ENCODE measurements at regions of chr11 and their contacts with region 1.

Region 1: DNA sequence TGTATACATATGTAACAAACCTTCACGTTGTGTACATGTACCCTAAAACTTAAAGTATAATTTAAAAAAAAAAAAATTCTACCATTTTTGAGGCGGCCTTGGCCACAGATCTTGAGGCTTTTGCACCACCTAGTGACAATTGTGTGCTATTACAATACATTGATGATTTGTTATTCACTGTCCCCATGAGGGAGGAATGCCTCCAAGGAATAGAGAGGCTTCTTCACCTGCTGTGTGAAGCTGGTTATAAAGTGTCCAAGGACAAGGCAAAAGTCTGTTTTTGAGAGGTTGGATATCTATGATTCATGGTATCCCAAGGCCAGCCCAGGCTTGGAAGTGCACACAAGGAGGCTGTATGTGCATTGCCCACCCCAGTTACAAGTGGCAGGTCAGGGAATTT is 30.7 kb downstream of the SLC22A25 start:
- DNase-seq: peak in 4 of 14 experiments; percentile 3 to 49 (median 39)
- ATAC-seq: no peak
- H3K4me3 ChIP-seq: no peak overlapping the region
- H3K4me3 Mint-ChIP-seq: no peak overlapping the region
- H3K27ac ChIP-seq: no peak overlapping the region
- H3K27ac Mint-ChIP-seq: no peak overlapping the region
- H3K4me1 ChIP-seq: no peaks in the 10 kb centered on the region
- H3K4me1 Mint-ChIP-seq: no peaks in the 10 kb centered on the region
- H3K27me3 ChIP-seq: peaks cover 0 to 11% of the 10 kb centered on the region in 2 experiments
- H3K27me3 Mint-ChIP-seq: peaks cover 41% of the 10 kb centered on the region
- CTCF ChIP-seq: peak; percentile 59

Region 2: DNA sequence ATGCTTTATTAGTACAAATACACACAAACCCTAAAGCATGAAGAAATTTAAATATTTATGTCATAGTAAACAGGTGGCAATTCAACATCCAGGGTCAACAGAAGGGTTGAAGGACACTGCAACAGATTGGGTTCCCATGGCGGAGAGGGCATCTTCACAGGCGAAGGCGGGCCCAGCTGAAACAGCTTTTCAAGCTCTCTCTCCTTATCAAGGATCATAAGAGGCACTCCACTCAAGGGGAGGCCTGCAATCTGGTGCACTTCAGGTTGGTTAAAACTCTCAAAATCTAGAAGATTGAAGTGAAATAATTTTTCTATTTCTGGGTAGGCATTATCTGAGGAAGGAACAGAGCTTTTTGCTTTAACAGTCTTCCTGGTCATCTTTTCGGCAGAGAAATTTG is 180.3 kb before region 1 on chr11:
- CTCF ChIA-PET with region 1: no interaction called
- POLR2A ChIA-PET with region 1: no interaction called
- intact Hi-C with region 1: loop called (anchors 2 to 5 kb)
- DNase-seq: no peak
- ATAC-seq: no peak
- H3K4me3 ChIP-seq: no peak overlapping the region
- H3K4me3 Mint-ChIP-seq: no peak overlapping the region
- H3K27ac ChIP-seq: no peak overlapping the region
- H3K27ac Mint-ChIP-seq: no peak overlapping the region
- H3K4me1 ChIP-seq: peaks cover 2% of the 10 kb centered on the region
- H3K4me1 Mint-ChIP-seq: no peaks in the 10 kb centered on the region
- H3K27me3 ChIP-seq: peaks cover 0 to 5% of the 10 kb centered on the region in 2 experiments
- H3K27me3 Mint-ChIP-seq: peaks cover 48% of the 10 kb centered on the region
- CTCF ChIP-seq: no peak

Region 3: GRCh38 chr11:63042596-63042995 is 170.1 kb before region 1 on chr11:
- CTCF ChIA-PET with region 1: no interaction called
- POLR2A ChIA-PET with region 1: no interaction called
- intact Hi-C with region 1: loop called in 1 of 2 experiments (anchors 5 kb)
- DNase-seq: no peak
- ATAC-seq: no peak
- H3K4me3 ChIP-seq: no peak overlapping the region
- H3K4me3 Mint-ChIP-seq: no peak overlapping the region
- H3K27ac ChIP-seq: no peak overlapping the region
- H3K27ac Mint-ChIP-seq: no peak overlapping the region
- H3K4me1 ChIP-seq: no peaks in the 10 kb centered on the region
- H3K4me1 Mint-ChIP-seq: no peaks in the 10 kb centered on the region
- H3K27me3 ChIP-seq: peaks cover 4 to 7% of the 10 kb centered on the region in 2 experiments
- H3K27me3 Mint-ChIP-seq: peaks cover 52% of the 10 kb centered on the region
- CTCF ChIP-seq: no peak

Region 4: GRCh38 chr11:63099555-63099954 is 113.2 kb before region 1 on chr11:
- CTCF ChIA-PET with region 1: no interaction called
- POLR2A ChIA-PET with region 1: no interaction called
- intact Hi-C with region 1: no loop called
- DNase-seq: no peak
- ATAC-seq: no peak
- H3K4me3 ChIP-seq: no peak overlapping the region
- H3K4me3 Mint-ChIP-seq: no peak overlapping the region
- H3K27ac ChIP-seq: no peak overlapping the region
- H3K27ac Mint-ChIP-seq: no peak overlapping the region
- H3K4me1 ChIP-seq: no peaks in the 10 kb centered on the region
- H3K4me1 Mint-ChIP-seq: no peaks in the 10 kb centered on the region
- H3K27me3 ChIP-seq: peaks cover 0 to 5% of the 10 kb centered on the region in 2 experiments
- H3K27me3 Mint-ChIP-seq: peaks cover 23% of the 10 kb centered on the region
- CTCF ChIP-seq: no peak

Region 5: DNA sequence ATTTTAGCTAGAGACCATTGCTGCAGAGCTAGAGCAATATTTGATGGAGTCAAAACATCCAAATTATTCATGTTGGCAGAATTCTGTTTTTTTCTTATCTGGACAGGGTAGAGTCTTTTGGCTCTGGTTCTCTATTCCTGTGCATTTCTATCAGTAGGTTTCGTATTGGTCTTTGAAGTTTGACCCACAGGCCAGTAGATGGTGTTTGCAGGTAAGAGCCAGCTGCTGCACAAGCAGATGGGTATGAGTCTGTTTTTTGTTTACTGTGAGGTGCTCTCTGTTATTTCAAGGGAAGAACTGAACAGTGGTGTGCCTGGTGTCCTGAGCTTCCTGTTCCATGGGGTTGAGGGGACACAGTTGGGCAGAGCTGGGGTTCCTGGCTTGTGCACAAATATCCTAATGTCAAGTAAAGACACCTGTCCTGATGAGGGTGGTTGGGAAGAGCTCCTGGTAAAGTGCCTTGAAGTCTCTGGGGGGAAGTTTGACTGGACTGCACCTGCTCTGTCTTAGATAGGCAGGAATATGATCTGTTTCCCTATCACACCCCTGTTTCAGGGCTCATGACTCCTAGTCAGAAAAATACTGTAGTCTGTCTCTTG is 64.7 kb after region 1 on chr11:
- CTCF ChIA-PET with region 1: no interaction called
- POLR2A ChIA-PET with region 1: no interaction called
- intact Hi-C with region 1: no loop called
- DNase-seq: peak in 1 of 14 experiments; percentile 3
- ATAC-seq: no peak
- H3K4me3 ChIP-seq: no peak overlapping the region
- H3K4me3 Mint-ChIP-seq: no peak overlapping the region
- H3K27ac ChIP-seq: no peak overlapping the region
- H3K27ac Mint-ChIP-seq: no peak overlapping the region
- H3K4me1 ChIP-seq: no peaks in the 10 kb centered on the region
- H3K4me1 Mint-ChIP-seq: no peaks in the 10 kb centered on the region
- H3K27me3 ChIP-seq: peaks cover 8 to 18% of the 10 kb centered on the region in 2 experiments
- H3K27me3 Mint-ChIP-seq: peaks cover 38% of the 10 kb centered on the region
- CTCF ChIP-seq: no peak

Measured in CD4-positive, alpha-beta T cell (primary cell).